ENCODE measurements at regions of chr6 and their contacts with region 1.

Region 1: DNA sequence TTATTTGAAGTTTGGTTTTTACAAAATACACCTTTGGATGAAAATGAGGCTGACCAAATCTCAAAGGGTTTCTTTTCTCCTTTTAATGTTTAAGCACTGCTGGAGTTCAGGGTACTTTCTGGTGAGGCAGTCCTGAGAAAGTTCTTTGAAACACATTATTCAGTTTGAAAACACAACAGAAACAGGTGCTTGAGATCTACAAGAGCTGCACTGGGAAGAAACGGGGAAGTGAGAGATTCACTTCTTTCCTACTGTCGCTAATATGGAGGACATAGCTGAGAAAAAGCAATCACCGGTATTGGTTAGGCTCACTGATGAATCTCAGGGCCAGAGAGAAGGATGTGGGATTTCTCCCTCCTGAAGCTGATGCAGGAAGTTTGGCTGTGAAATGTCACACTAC is 22.9 kb upstream of the TMEM170B start:
- DNase-seq: peak; percentile 58
- ATAC-seq: peak; percentile 60
- H3K4me3 ChIP-seq: no peak overlapping the region
- H3K4me3 Mint-ChIP-seq: peak overlapping the region; percentile 51
- H3K27ac ChIP-seq: peak overlapping the region; percentile 7 to 52
- H3K27ac Mint-ChIP-seq: peak overlapping the region; percentile 70
- H3K4me1 ChIP-seq: peaks cover 18 to 21% of the 10 kb centered on the region in 2 donors
- H3K4me1 Mint-ChIP-seq: peaks cover 30% of the 10 kb centered on the region
- H3K27me3 ChIP-seq: no peaks in the 10 kb centered on the region
- H3K27me3 Mint-ChIP-seq: no peaks in the 10 kb centered on the region
- CTCF ChIP-seq: no peak

Region 2: DNA sequence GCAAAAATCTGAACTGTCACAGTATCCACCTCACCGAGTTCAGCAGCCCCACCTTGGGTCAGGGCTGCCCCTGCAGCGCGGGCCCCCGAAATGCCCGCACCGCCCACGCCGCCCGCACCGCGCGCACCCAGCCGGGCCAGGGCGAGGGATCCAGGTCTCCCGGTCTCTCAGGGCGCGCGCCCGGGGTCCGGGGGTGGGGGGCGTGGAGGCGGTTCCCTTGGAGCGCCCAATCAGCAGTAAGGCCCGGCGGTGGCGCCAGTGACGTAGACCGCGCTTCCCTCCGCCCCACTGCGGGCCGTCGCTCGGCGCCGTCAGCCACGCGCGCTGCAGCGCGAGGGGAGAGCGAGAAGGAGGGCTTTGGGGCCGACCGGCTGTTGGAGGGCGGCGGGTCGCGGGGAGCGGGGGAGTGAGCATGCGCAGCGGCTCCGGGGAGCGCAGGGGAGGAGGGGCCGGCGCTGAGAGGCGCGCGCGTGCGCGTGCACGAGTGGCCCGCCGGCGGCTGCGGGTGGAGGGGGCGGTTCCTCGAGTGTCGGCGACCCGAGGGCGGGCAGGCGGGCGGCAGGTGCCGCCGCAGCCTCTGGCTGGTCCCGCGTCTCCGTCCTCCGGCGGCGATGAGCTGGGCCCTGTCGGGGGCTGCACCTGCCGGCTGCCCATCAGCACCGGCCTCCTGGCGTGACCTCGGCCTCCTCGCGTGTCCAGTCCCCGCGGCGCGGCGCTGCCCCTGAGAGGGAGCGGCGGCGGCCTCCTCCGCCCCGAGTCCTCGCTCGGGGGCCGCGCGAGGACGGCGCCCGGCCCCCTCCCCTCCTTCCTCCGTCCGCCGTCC is 22.8 kb after region 1 on chr6 and contains the start of gene TMEM170B:
- CTCF ChIA-PET with region 1: interaction called, 3 read pairs
- POLR2A ChIA-PET with region 1: no interaction called
- intact Hi-C with region 1: loop called (anchors 1 kb)
- DNase-seq: peak; percentile 99
- ATAC-seq: peak; percentile 93
- H3K4me3 ChIP-seq: peak within 1 kb of the TSS; percentile 68 to 83 (median 80)
- H3K4me3 Mint-ChIP-seq: peak within 1 kb of the TSS; percentile 87
- H3K27ac ChIP-seq: peak within 1 kb of the TSS; percentile 19 to 83
- H3K27ac Mint-ChIP-seq: peak within 1 kb of the TSS; percentile 92
- H3K4me1 ChIP-seq: peaks cover 8 to 11% of the 10 kb centered on the region in 2 donors
- H3K4me1 Mint-ChIP-seq: peaks cover 16% of the 10 kb centered on the region
- H3K27me3 ChIP-seq: no peaks in the 10 kb centered on the region
- H3K27me3 Mint-ChIP-seq: peaks cover 8% of the 10 kb centered on the region
- CTCF ChIP-seq: no peak
- total RNA-seq, gene TMEM170B: 3.2 and 3.4 TPM in 2 replicates

Region 3: GRCh38 chr6:11566609-11567008 is 51.9 kb after region 1 on chr6:
- CTCF ChIA-PET with region 1: no interaction called
- POLR2A ChIA-PET with region 1: no interaction called
- intact Hi-C with region 1: loop called (anchors 5 kb)
- DNase-seq: no peak
- ATAC-seq: no peak
- H3K4me3 ChIP-seq: no peak overlapping the region
- H3K4me3 Mint-ChIP-seq: no peak overlapping the region
- H3K27ac ChIP-seq: no peak overlapping the region
- H3K27ac Mint-ChIP-seq: no peak overlapping the region
- H3K4me1 ChIP-seq: no peaks in the 10 kb centered on the region
- H3K4me1 Mint-ChIP-seq: no peaks in the 10 kb centered on the region
- H3K27me3 ChIP-seq: no peaks in the 10 kb centered on the region
- H3K27me3 Mint-ChIP-seq: no peaks in the 10 kb centered on the region
- CTCF ChIP-seq: no peak

Region 4: GRCh38 chr6:11609315-11610071 is 94.8 kb after region 1 on chr6:
- CTCF ChIA-PET with region 1: no interaction called
- POLR2A ChIA-PET with region 1: no interaction called
- intact Hi-C with region 1: no loop called
- DNase-seq: no peak
- ATAC-seq: no peak
- H3K4me3 ChIP-seq: no peak overlapping the region
- H3K4me3 Mint-ChIP-seq: no peak overlapping the region
- H3K27ac ChIP-seq: no peak overlapping the region
- H3K27ac Mint-ChIP-seq: no peak overlapping the region
- H3K4me1 ChIP-seq: no peaks in the 10 kb centered on the region
- H3K4me1 Mint-ChIP-seq: no peaks in the 10 kb centered on the region
- H3K27me3 ChIP-seq: no peaks in the 10 kb centered on the region
- H3K27me3 Mint-ChIP-seq: peaks cover 25% of the 10 kb centered on the region
- CTCF ChIP-seq: no peak